Activated CD4-positive, alpha-beta T cell treated with anti-CD3 and anti-CD28 coated beads, Interleukin-2, amount 10 ng/mL, durations not matched to agents 24 days and 14 days (primary cell): ENCODE measurements at regions of chr6 and their contacts with region 1.

Region 1: GRCh38 chr6:149925974-149926777 is 3.3 kb upstream of the RAET1G start:
- DNase-seq: peak; percentile 94
- H3K4me3 Mint-ChIP-seq: peak overlapping the region; percentile 76
- H3K27ac Mint-ChIP-seq: no peak overlapping the region
- H3K4me1 Mint-ChIP-seq: peaks cover 20% of the 10 kb centered on the region
- H3K27me3 Mint-ChIP-seq: peaks cover 87% of the 10 kb centered on the region

Region 2: DNA sequence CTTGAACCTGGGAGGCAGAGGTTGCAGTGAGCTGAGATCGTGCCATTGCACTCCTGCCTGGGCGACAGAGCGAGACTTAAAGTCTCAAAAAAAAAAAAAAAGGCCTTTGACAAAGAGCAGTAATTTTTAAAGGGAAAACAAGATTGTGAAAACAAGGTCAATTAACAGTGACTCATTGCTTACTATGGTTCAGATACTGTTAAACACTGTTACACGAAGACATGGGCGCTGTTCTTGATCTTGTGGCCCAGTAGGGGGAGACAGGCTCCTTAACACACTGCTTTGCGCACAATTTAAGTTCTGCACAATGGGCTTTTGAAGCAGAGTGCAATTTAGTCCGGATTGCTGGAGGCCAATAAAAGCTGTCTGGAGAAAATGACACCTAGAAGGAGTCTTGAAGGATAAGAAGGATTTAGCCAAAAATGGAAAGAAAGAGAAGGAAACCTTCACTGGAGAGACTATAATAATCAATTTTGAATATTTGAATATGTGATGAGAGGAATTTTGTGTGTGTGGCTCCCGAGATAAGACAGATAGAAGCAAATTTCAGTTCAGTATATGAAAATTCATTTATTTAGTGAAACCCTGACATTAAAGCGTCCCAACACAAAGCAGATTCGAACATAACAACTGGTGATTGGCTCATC is 202.3 kb before region 1 on chr6:
- intact Hi-C with region 1: loop called (anchors 2 kb)
- DNase-seq: peak; percentile 85
- H3K4me3 Mint-ChIP-seq: no peak overlapping the region
- H3K27ac Mint-ChIP-seq: no peak overlapping the region
- H3K4me1 Mint-ChIP-seq: peaks cover 21% of the 10 kb centered on the region
- H3K27me3 Mint-ChIP-seq: no peaks in the 10 kb centered on the region

Region 3: DNA sequence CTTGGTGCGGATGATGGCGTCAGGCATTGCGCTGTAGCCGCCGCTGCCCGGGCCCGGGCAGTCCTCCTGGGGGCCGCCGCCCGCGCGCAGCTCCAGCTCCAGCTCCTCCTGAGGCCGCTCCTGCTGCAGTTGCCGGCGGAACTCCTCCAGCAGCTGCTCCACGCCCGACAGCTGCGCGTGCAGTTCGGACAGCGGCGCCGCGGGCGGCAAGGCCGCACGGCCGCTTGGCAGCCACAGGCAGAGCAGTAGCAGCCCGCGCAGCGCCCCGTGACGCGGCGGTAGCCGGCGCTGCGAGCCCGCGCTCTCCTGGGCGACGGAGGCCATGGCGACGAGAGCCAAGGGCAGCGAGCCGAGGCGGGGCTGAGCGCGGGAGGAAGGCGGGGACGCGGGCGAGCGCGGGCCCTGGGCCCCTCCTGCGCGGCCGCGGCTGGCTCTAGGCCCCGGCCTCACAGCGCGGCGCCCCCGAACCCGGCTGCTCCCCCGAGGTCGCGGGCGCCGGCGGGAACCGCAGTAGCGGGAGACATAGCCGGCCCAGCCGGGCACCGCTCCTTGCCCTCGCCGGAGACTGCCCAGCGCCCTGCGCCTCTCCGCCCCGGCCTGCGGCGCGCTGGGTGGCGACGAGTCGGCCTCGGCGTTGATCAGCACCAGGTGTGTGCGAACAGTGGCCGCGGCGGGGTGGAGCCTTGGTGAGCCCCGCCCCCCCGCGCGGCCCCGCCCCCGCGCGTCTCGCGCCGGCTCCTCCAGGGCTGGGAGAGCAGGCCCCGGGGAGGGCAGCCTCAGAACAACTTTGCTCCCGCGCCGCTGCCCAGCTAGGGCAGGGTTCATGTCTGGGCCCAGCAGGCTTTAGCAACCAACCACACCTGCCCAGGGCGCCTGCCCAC is 62.2 kb before region 1 on chr6 and contains the start of gene LRP11:
- intact Hi-C with region 1: loop called (anchors 2 kb)
- DNase-seq: peak; percentile 95
- H3K4me3 Mint-ChIP-seq: peak within 1 kb of the TSS; percentile 83
- H3K27ac Mint-ChIP-seq: no peak within 1 kb of the TSS
- H3K4me1 Mint-ChIP-seq: peaks cover 20% of the 10 kb centered on the region
- H3K27me3 Mint-ChIP-seq: peaks cover 33% of the 10 kb centered on the region
- total RNA-seq, gene LRP11: 3.7 TPM in 2 replicates